T-cell (primary cell): ENCODE measurements at regions of chr18 and their contacts with region 1.

Region 1: DNA sequence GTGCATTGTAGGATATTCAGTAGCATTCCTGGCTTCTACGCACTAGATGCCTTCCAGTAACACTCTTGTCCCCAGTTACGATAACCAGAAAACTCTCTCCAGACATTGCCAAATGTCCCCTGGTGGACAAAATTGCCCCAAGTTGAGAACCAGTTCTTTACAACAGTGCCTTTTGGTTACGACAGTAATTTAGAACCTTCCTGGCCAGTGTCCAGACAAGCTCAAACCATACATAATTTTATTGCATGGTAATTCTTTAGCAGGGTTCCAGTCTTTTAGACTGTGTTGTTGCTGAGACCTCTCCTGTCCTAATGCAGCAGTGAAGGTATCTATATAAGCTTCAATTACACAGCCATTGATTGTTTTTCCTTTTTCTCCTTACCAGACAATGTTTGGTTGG is 20.2 kb downstream of the RNMT start:
- DNase-seq: no peak
- ATAC-seq: no peak
- H3K4me3 ChIP-seq: no peak overlapping the region
- H3K4me3 Mint-ChIP-seq: no peak overlapping the region
- H3K27ac ChIP-seq: no peak overlapping the region
- H3K27ac Mint-ChIP-seq: no peak overlapping the region
- H3K4me1 ChIP-seq: no peaks in the 10 kb centered on the region
- H3K4me1 Mint-ChIP-seq: no peaks in the 10 kb centered on the region
- H3K27me3 ChIP-seq: no peaks in the 10 kb centered on the region
- H3K27me3 Mint-ChIP-seq: no peaks in the 10 kb centered on the region

Region 2: DNA sequence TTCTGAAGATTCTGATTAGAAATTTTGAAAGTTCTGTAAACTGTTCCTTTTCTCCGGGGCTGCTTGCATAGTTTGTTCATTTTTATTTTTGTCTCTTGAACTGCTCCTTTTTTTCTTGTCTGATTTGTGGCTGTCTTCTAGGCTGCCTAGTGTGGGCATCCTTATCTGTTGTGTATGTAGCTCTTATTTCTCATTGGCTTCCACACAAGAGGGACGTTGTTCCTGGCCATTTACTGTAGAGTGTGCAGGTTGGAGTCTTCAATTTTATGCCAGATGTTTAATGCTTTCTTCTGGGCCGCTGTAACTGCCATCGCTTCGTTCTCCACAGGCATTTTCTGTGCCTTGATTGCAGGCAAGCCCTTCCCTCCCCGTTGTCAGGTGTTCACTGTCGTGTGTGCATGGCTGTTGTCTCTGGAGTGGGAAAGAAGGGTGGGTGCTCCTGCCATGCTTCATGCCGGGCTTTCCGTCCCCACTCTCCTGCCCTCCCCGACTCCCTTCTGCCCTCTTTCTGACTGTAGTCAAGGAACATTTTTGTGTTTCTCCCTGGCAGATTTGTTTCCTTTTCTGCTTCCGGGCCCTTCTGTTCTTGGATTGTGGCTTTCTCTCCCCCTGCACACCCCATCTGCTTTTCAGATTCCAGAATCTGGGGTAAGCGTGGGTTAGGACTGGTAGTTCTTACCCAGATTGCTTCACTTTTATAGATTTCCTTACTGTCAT is 739.9 kb before region 1 on chr18:
- CTCF ChIA-PET with region 1: no interaction called
- POLR2A ChIA-PET with region 1: no interaction called
- DNase-seq: no peak
- ATAC-seq: no peak
- H3K4me3 ChIP-seq: no peak overlapping the region
- H3K4me3 Mint-ChIP-seq: no peak overlapping the region
- H3K27ac ChIP-seq: no peak overlapping the region
- H3K27ac Mint-ChIP-seq: no peak overlapping the region
- H3K4me1 ChIP-seq: no peaks in the 10 kb centered on the region
- H3K4me1 Mint-ChIP-seq: peaks cover 7 to 22% (median 14%) of the 10 kb centered on the region in 3 donors
- H3K27me3 ChIP-seq: no peaks in the 10 kb centered on the region
- H3K27me3 Mint-ChIP-seq: no peaks in the 10 kb centered on the region

Region 3: DNA sequence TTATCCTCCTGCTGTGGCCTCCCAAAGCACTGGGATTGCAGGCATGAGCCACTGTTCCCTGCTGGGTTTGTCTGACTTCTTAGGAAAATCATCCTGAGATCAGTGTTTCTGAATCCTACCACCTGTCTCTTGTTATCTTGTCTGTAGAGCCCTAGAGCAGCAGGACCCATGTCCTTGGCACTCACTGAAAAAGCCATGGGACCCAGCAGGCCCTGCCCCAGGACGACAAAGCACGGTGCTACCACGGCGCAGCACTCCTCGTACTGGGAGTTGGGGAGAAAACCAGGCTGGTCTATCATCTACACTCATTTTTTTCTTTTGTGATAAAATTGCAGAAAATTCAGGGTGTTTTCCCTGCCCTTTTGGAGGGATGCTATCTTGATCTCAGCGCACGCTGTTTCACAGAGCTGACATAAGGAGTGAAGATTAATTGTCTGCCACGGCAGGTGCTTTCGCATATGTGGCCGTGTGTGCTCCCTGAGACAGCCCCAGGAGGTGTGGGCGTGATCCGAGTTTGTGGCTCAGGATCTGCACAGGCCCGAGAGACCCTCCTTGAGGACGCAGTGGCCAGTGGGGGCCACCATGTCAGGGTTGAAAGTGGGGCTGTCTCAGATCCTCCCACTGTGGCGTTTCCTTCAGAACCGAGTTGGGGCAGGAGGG is 349.0 kb before region 1 on chr18:
- CTCF ChIA-PET with region 1: no interaction called
- POLR2A ChIA-PET with region 1: no interaction called
- DNase-seq: no peak
- ATAC-seq: no peak
- H3K4me3 ChIP-seq: no peak overlapping the region
- H3K4me3 Mint-ChIP-seq: no peak overlapping the region
- H3K27ac ChIP-seq: no peak overlapping the region
- H3K27ac Mint-ChIP-seq: no peak overlapping the region
- H3K4me1 ChIP-seq: peaks cover 0 to 13% of the 10 kb centered on the region in 2 experiments
- H3K4me1 Mint-ChIP-seq: peaks cover 31 to 39% (median 33%) of the 10 kb centered on the region in 3 donors
- H3K27me3 ChIP-seq: no peaks in the 10 kb centered on the region
- H3K27me3 Mint-ChIP-seq: no peaks in the 10 kb centered on the region

Region 4: DNA sequence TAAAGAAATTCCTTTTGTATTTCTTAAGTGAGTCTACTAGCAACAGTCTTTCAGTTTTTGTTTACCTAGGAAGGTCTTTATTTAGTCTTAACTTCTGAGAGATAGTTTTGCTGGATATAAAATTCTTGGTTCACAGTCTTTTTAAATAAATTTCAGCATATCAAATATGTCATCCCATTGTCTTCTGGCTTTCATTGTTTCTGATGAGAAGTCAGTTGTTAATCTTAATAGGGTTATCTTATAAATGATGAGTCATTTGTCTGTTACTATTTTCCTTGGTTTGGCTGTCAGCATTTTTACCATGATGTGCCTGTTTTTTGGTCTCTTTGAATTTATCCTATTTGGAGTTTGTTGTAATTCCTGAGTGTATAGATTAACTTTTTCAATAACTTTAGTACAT is 149.6 kb before region 1 on chr18:
- CTCF ChIA-PET with region 1: no interaction called
- POLR2A ChIA-PET with region 1: no interaction called
- DNase-seq: no peak
- ATAC-seq: no peak
- H3K4me3 ChIP-seq: no peak overlapping the region
- H3K4me3 Mint-ChIP-seq: no peak overlapping the region
- H3K27ac ChIP-seq: no peak overlapping the region
- H3K27ac Mint-ChIP-seq: no peak overlapping the region
- H3K4me1 ChIP-seq: peaks cover 0 to 2% of the 10 kb centered on the region in 2 experiments
- H3K4me1 Mint-ChIP-seq: peaks cover 3 to 13% (median 4%) of the 10 kb centered on the region in 3 donors
- H3K27me3 ChIP-seq: no peaks in the 10 kb centered on the region
- H3K27me3 Mint-ChIP-seq: no peaks in the 10 kb centered on the region

Region 5: DNA sequence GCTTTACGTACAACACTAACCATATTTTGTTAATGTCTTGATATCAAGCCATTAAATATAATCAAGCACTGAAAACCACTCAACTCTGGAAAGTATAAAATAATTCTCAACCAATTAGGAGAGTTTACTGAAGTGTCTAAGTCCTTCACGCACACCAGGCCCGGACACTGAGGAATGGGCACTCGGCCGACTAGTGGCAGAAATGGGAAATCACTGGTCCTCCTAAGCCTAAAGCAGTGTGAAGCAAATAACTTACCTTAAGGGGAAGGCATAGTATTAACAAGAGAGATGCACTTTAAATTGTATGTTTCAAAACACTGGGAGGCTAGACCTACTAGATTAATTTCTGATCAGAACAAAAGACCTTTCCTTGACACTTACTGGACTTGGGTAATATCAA is 66.0 kb before region 1 on chr18:
- CTCF ChIA-PET with region 1: no interaction called
- POLR2A ChIA-PET with region 1: interaction called in 1 of 2 experiments, 11 read pairs
- DNase-seq: peak in 1 of 35 experiments; percentile 8
- ATAC-seq: no peak
- H3K4me3 ChIP-seq: no peak overlapping the region
- H3K4me3 Mint-ChIP-seq: no peak overlapping the region
- H3K27ac ChIP-seq: no peak overlapping the region
- H3K27ac Mint-ChIP-seq: no peak overlapping the region
- H3K4me1 ChIP-seq: no peaks in the 10 kb centered on the region
- H3K4me1 Mint-ChIP-seq: peaks cover 3 to 12% (median 7%) of the 10 kb centered on the region in 3 donors
- H3K27me3 ChIP-seq: no peaks in the 10 kb centered on the region
- H3K27me3 Mint-ChIP-seq: no peaks in the 10 kb centered on the region